Activated naive CD4-positive, alpha-beta T cell treated with anti-CD3 and anti-CD28 coated beads for 36 hours (primary cell): ENCODE measurements at regions of chr5 and their contacts with region 1.

Region 1: GRCh38 chr5:142548739-142549275 is 137.1 kb downstream of the FGF1 start:
- DNase-seq: peak; percentile 57
- H3K4me3 Mint-ChIP-seq: no peak overlapping the region
- H3K27ac Mint-ChIP-seq: no peak overlapping the region
- H3K4me1 Mint-ChIP-seq: peaks cover 13% of the 10 kb centered on the region
- H3K27me3 Mint-ChIP-seq: peaks cover 19% of the 10 kb centered on the region

Region 2: DNA sequence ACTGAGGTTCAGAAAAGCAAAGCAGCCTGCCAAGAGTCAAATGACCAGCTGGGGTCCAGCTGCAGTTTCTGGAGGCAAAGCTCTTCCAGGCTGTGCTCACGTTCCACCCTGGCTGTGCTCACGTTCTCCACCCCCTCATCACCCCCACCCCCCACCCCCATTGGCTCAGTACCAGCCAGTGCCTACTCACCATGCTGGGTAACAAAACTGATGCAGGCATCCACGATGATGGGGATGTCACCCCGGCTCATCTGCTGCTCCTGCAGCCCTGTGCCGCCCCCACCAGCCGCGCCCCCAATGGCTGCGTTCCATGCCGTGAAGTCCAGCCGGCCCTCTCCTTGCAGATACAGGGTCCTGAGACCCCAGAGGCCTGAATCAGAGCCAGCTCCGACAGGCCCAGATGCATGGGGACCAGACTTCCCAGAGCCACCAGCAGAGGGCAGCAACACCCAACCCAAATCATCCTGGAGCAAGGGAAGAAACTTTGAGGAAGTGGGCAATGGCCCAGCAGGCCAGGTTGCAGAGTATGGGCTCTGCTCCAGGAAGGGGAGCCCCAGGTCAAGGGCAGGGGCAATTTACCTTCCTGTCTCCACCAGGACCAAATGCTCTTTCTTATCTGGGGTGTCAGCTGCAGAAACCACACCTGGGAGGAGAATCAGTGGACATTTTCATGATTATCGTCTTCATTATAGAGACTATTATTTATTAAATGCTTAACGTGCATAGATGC is 883.9 kb before region 1 on chr5:
- CTCF ChIA-PET with region 1: no interaction called
- intact Hi-C with region 1: no loop called
- DNase-seq: peak; percentile 84
- H3K4me3 Mint-ChIP-seq: no peak overlapping the region
- H3K27ac Mint-ChIP-seq: no peak overlapping the region
- H3K4me1 Mint-ChIP-seq: peaks cover 2% of the 10 kb centered on the region
- H3K27me3 Mint-ChIP-seq: no peaks in the 10 kb centered on the region

Region 3: GRCh38 chr5:142151436-142152383 is 397.1 kb before region 1 on chr5:
- CTCF ChIA-PET with region 1: no interaction called
- intact Hi-C with region 1: loop called (anchors 1 kb)
- DNase-seq: peak; percentile 76
- H3K4me3 Mint-ChIP-seq: no peak overlapping the region
- H3K27ac Mint-ChIP-seq: no peak overlapping the region
- H3K4me1 Mint-ChIP-seq: peaks cover 15% of the 10 kb centered on the region
- H3K27me3 Mint-ChIP-seq: no peaks in the 10 kb centered on the region

Region 4: DNA sequence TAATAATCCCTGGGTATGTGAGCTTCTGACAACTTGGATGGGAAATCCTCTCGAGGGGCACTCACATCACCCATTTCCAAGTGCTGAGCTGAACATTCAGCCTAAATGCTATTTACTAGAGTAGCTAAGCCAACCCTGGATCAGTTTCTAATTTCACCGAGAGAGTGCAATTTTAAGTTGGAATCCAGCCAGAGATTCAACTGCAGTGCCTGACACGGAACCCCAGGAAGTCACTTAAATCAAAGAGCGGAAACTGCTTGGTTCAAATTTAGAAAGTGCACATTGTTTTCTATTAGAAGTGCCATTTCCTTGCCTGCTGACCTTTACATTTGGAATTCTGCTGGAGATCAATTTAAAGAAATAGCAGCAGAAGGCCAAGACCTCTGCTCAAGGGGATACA is 232.8 kb before region 1 on chr5:
- CTCF ChIA-PET with region 1: interaction called, 3 read pairs
- intact Hi-C with region 1: loop called (anchors 2 kb)
- DNase-seq: peak; percentile 24
- H3K4me3 Mint-ChIP-seq: no peak overlapping the region
- H3K27ac Mint-ChIP-seq: no peak overlapping the region
- H3K4me1 Mint-ChIP-seq: peaks cover 29% of the 10 kb centered on the region
- H3K27me3 Mint-ChIP-seq: peaks cover 11% of the 10 kb centered on the region

Region 5: DNA sequence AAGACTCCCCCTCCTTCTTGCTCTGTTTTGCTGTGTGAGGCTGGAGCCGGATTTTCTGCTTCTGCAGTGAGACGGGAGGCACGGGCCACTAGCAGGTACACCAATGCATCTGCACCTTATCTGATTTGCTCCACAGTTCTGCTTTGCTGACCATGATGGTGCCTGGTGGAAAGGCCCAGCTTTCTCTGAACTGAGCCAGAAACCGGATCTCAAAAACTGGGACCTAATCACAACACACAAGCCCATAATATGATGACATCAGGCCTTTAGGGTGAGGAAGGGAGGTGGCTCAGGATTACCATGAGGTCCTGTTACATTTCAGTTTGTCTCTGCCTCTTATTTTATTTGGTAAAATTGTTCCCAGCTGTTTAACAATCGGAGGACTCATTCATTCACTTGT is 87.3 kb after region 1 on chr5:
- CTCF ChIA-PET with region 1: no interaction called
- intact Hi-C with region 1: no loop called
- DNase-seq: no peak
- H3K4me3 Mint-ChIP-seq: no peak overlapping the region
- H3K27ac Mint-ChIP-seq: no peak overlapping the region
- H3K4me1 Mint-ChIP-seq: no peaks in the 10 kb centered on the region
- H3K27me3 Mint-ChIP-seq: peaks cover 3% of the 10 kb centered on the region